Activated CD4-positive, alpha-beta T cell treated with anti-CD3 and anti-CD28 coated beads for 36 hours (primary cell): ENCODE measurements at regions of chr7 and their contacts with region 1.

Region 1: GRCh38 chr7:33744293-33745075 is 160.9 kb upstream of the BMPER start:
- DNase-seq: no peak
- ATAC-seq: peak; percentile 39
- H3K4me3 Mint-ChIP-seq: no peak overlapping the region
- H3K27ac Mint-ChIP-seq: no peak overlapping the region
- H3K4me1 Mint-ChIP-seq: no peaks in the 10 kb centered on the region
- H3K27me3 Mint-ChIP-seq: no peaks in the 10 kb centered on the region

Region 2: DNA sequence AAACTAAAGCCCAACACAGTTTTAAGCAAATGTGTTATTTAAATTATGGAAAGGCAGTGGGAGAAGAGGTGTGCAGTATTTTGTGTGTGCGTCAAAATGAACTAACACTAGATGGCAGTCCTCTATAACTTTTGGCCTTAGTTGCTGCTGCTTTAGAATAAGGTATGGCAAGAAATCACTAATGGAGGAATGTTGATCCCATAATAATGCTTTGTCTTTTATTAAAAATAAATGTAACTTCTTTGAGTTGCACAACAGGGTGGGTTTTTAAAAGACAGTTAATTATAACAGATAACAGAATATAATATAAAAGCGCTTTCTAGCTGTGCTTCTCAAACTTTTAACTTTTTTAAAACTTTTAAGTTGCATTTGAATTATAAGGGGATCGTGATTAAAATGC is 558.7 kb before region 1 on chr7:
- CTCF ChIA-PET with region 1: no interaction called
- POLR2A ChIA-PET with region 1: no interaction called
- intact Hi-C with region 1: loop called in 1 of 2 experiments (anchors 1 kb)
- DNase-seq: peak; percentile 9
- ATAC-seq: no peak
- H3K4me3 Mint-ChIP-seq: no peak overlapping the region
- H3K27ac Mint-ChIP-seq: no peak overlapping the region
- H3K4me1 Mint-ChIP-seq: peaks cover 5% of the 10 kb centered on the region
- H3K27me3 Mint-ChIP-seq: no peaks in the 10 kb centered on the region

Region 3: GRCh38 chr7:33243319-33243881 is 501.1 kb before region 1 on chr7:
- CTCF ChIA-PET with region 1: no interaction called
- POLR2A ChIA-PET with region 1: no interaction called
- intact Hi-C with region 1: loop called in 1 of 2 experiments (anchors 2 kb)
- DNase-seq: no peak
- ATAC-seq: no peak
- H3K4me3 Mint-ChIP-seq: no peak overlapping the region
- H3K27ac Mint-ChIP-seq: no peak overlapping the region
- H3K4me1 Mint-ChIP-seq: no peaks in the 10 kb centered on the region
- H3K27me3 Mint-ChIP-seq: no peaks in the 10 kb centered on the region